ENCODE measurements at regions of chr1 and their contacts with region 1.

Region 1: DNA sequence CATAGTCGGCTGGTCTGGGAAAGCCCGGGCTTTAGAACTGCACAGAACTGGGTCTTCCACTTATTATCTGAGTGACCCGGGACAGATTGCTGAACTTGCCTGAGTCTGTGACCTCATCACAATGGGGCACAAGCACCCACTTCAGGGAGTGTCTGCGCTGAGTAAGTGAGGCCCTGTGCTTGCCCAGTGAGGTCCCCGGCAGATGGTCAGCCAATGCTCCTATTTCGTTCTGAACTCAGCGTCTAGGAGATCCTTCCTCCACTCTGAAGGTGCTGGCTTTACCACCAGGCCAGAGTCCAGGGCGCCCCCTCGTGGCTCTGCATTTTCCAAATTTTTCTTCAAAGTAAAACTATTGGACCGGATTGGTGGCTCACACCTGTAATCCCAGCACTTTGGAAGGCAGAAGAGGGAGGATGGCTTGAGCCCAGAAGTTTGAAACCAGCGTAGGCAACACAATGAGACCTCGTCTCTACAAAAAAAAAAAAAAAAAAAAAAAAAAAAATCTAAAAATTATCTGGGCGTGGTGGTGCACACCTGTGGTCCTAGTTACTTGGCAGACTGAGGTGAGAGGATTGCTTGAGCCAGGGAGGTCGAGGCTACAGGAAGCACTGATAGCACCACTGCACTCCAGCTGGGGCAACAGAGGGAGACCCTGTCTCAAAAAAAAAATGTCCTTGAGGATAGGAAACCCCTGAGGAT is 61.7 kb downstream of the FCRL5 start:
- DNase-seq: no peak
- H3K4me3 ChIP-seq: no peak overlapping the region
- H3K27ac ChIP-seq: no peak overlapping the region
- H3K4me1 ChIP-seq: no peaks in the 10 kb centered on the region
- H3K27me3 ChIP-seq: peaks cover 0 to 21% (median 0%) of the 10 kb centered on the region in 4 donors
- CTCF ChIP-seq: peak; percentile 37 to 47 (median 40)
- EP300 ChIP-seq: no peak
- POLR2A ChIP-seq: no peak

Region 2: GRCh38 chr1:157090196-157090647 is 400.4 kb before region 1 on chr1:
- intact Hi-C with region 1: loop called (anchors 10 kb)
- DNase-seq: no peak
- H3K4me3 ChIP-seq: no peak overlapping the region
- H3K27ac ChIP-seq: no peak overlapping the region
- H3K4me1 ChIP-seq: peaks cover 8 to 16% (median 14%) of the 10 kb centered on the region in 4 donors
- H3K27me3 ChIP-seq: no peaks in the 10 kb centered on the region
- CTCF ChIP-seq: peak; percentile 88 to 96 (median 94)
- EP300 ChIP-seq: no peak
- POLR2A ChIP-seq: no peak

Region 3: GRCh38 chr1:157163273-157164127 is 327.1 kb before region 1 on chr1:
- intact Hi-C with region 1: loop called (anchors 5 kb)
- DNase-seq: no peak
- H3K4me3 ChIP-seq: no peak overlapping the region
- H3K27ac ChIP-seq: no peak overlapping the region
- H3K4me1 ChIP-seq: peaks cover 0 to 5% (median 2%) of the 10 kb centered on the region in 4 donors
- H3K27me3 ChIP-seq: peaks cover 0 to 23% (median 5%) of the 10 kb centered on the region in 4 donors
- CTCF ChIP-seq: peak; percentile 68 to 98 (median 86)
- EP300 ChIP-seq: no peak
- POLR2A ChIP-seq: no peak

Region 4: GRCh38 chr1:157233131-157233530 is 257.5 kb before region 1 on chr1:
- intact Hi-C with region 1: no loop called
- DNase-seq: peak; percentile 29
- H3K4me3 ChIP-seq: no peak overlapping the region
- H3K27ac ChIP-seq: no peak overlapping the region
- H3K4me1 ChIP-seq: no peaks in the 10 kb centered on the region
- H3K27me3 ChIP-seq: no peaks in the 10 kb centered on the region
- CTCF ChIP-seq: no peak
- EP300 ChIP-seq: no peak
- POLR2A ChIP-seq: no peak

Region 5: DNA sequence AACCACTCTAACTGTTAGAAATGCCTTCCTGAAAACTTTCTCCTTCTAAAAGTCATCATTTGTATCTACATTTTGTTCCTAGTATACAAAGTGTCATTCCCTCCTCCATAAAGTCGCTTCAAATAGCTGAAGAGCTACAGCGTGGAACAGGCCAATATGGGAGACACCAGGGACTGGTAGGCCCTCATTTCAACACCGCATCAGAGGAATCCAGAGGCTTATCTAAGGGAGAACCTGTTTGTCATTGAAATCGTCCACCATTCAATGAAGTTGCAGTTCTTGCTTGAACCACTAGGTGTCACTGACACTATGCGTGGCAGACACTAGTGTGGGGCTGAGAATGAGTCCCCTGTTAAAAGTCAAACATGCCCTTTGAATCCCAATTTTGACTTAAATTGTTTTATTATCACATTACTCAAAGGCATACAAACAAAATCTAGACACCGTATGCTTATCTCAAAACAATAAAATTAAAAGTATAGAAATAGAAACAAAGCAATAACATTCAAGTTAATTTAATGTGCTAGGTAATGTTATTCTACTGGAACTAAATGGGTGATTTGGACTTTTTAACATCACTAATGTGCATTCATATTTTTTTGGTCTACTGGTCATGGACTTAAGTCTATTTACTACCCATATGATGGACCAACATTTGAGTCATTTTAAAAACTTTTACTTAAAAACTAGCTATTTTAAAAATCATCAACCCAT is 120.7 kb before region 1 on chr1:
- intact Hi-C with region 1: loop called (anchors 2 kb)
- DNase-seq: peak; percentile 74
- H3K4me3 ChIP-seq: no peak overlapping the region
- H3K27ac ChIP-seq: no peak overlapping the region
- H3K4me1 ChIP-seq: no peaks in the 10 kb centered on the region
- H3K27me3 ChIP-seq: peaks cover 0 to 3% (median 0%) of the 10 kb centered on the region in 4 donors
- CTCF ChIP-seq: peak; percentile 69 to 92 (median 86)
- EP300 ChIP-seq: no peak
- POLR2A ChIP-seq: no peak

Region 6: GRCh38 chr1:157862114-157863070 is 371.8 kb after region 1 on chr1:
- intact Hi-C with region 1: no loop called
- DNase-seq: no peak
- H3K4me3 ChIP-seq: no peak overlapping the region
- H3K27ac ChIP-seq: no peak overlapping the region
- H3K4me1 ChIP-seq: no peaks in the 10 kb centered on the region
- H3K27me3 ChIP-seq: peaks cover 0 to 9% (median 0%) of the 10 kb centered on the region in 4 donors
- CTCF ChIP-seq: no peak
- EP300 ChIP-seq: no peak
- POLR2A ChIP-seq: no peak

Measured in esophagus muscularis mucosa (tissue), 4 donors.